ENCODE measurements at regions of chr1 and their contacts with region 1.

Region 1: GRCh38 chr1:151327223-151327902 is at the start of gene PI4KB:
- DNase-seq: peak; percentile 85 to 93 (median 91)
- ATAC-seq: peak; percentile 97 to 98 (median 98)
- H3K4me3 ChIP-seq: peak within 1 kb of the TSS; percentile 70 to 95 (median 86)
- H3K27ac ChIP-seq: peak within 1 kb of the TSS; percentile 82 to 99 (median 96)
- H3K4me1 ChIP-seq: peaks cover 0 to 41% (median 24%) of the 10 kb centered on the region in 12 donors
- H3K27me3 ChIP-seq: no peaks in the 10 kb centered on the region
- CTCF ChIP-seq: no peak
- POLR2A ChIP-seq: peak in 1 of 2 donors; percentile 85
- total RNA-seq, gene PI4KB: 34.9 to 76.0 (median 49.8) TPM

Region 2: GRCh38 chr1:151281969-151282882 is 45.1 kb before region 1 on chr1 and contains the start of gene ZNF687:
- intact Hi-C with region 1: loop called in 1 of 10 experiments (anchors 5 kb)
- DNase-seq: peak; percentile 100
- ATAC-seq: peak; percentile 91 to 98 (median 94)
- H3K4me3 ChIP-seq: peak within 1 kb of the TSS; percentile 71 to 98 (median 90)
- H3K27ac ChIP-seq: peak within 1 kb of the TSS; percentile 92 to 100 (median 98)
- H3K4me1 ChIP-seq: peaks cover 0 to 37% (median 14%) of the 10 kb centered on the region in 12 donors
- H3K27me3 ChIP-seq: no peaks in the 10 kb centered on the region
- CTCF ChIP-seq: no peak
- POLR2A ChIP-seq: peak in 1 of 2 donors; percentile 78
- total RNA-seq, gene ZNF687: 10.9 to 30.3 (median 14.3) TPM

Region 3: GRCh38 chr1:151311589-151312331 is 15.6 kb before region 1 on chr1:
- intact Hi-C with region 1: loop called in 1 of 10 experiments (anchors 2 kb)
- DNase-seq: peak in 4 of 5 donors; percentile 54 to 94 (median 74)
- ATAC-seq: peak; percentile 77 to 97 (median 92)
- H3K4me3 ChIP-seq: no peak overlapping the region
- H3K27ac ChIP-seq: peak overlapping the region in 11 of 12 donors; percentile 52 to 91 (median 74)
- H3K4me1 ChIP-seq: peaks cover 24 to 73% (median 60%) of the 10 kb centered on the region in 12 donors
- H3K27me3 ChIP-seq: no peaks in the 10 kb centered on the region
- CTCF ChIP-seq: no peak
- POLR2A ChIP-seq: no peak

Region 4: GRCh38 chr1:151340870-151341754 is 13.7 kb after region 1 on chr1:
- intact Hi-C with region 1: loop called in 1 of 10 experiments (anchors 1 kb)
- DNase-seq: peak in 3 of 5 donors; percentile 33 to 61 (median 43)
- ATAC-seq: peak; percentile 85 to 91 (median 88)
- H3K4me3 ChIP-seq: no peak overlapping the region
- H3K27ac ChIP-seq: peak overlapping the region in 2 of 12 donors; percentile 30 to 54
- H3K4me1 ChIP-seq: peaks cover 0 to 24% (median 7%) of the 10 kb centered on the region in 12 donors
- H3K27me3 ChIP-seq: no peaks in the 10 kb centered on the region
- CTCF ChIP-seq: peak; percentile 61 to 81 (median 73)
- POLR2A ChIP-seq: no peak

Region 5: GRCh38 chr1:151372061-151372934 is 44.9 kb after region 1 on chr1 and contains the start of gene SELENBP1:
- intact Hi-C with region 1: loop called in 1 of 10 experiments (anchors 1 kb)
- DNase-seq: peak; percentile 79 to 95 (median 90)
- ATAC-seq: peak; percentile 86 to 91 (median 86)
- H3K4me3 ChIP-seq: peak within 1 kb of the TSS; percentile 2 to 74 (median 52)
- H3K27ac ChIP-seq: peak within 1 kb of the TSS; percentile 66 to 89 (median 84)
- H3K4me1 ChIP-seq: peaks cover 4 to 58% (median 48%) of the 10 kb centered on the region in 12 donors
- H3K27me3 ChIP-seq: no peaks in the 10 kb centered on the region
- CTCF ChIP-seq: no peak
- POLR2A ChIP-seq: peak in 1 of 2 donors; percentile 85
- total RNA-seq, gene SELENBP1: 27.6 to 97.8 (median 48.7) TPM

Region 6: GRCh38 chr1:151435160-151435559 is 107.8 kb after region 1 on chr1:
- intact Hi-C with region 1: no loop called
- DNase-seq: no peak
- ATAC-seq: no peak
- H3K4me3 ChIP-seq: no peak overlapping the region
- H3K27ac ChIP-seq: no peak overlapping the region
- H3K4me1 ChIP-seq: peaks cover 0 to 32% (median 11%) of the 10 kb centered on the region in 12 donors
- H3K27me3 ChIP-seq: no peaks in the 10 kb centered on the region
- CTCF ChIP-seq: no peak
- POLR2A ChIP-seq: no peak

Measured in heart left ventricle (tissue), 16 donors.